ENCODE measurements at regions of chr7 and their contacts with region 1.

Region 1: DNA sequence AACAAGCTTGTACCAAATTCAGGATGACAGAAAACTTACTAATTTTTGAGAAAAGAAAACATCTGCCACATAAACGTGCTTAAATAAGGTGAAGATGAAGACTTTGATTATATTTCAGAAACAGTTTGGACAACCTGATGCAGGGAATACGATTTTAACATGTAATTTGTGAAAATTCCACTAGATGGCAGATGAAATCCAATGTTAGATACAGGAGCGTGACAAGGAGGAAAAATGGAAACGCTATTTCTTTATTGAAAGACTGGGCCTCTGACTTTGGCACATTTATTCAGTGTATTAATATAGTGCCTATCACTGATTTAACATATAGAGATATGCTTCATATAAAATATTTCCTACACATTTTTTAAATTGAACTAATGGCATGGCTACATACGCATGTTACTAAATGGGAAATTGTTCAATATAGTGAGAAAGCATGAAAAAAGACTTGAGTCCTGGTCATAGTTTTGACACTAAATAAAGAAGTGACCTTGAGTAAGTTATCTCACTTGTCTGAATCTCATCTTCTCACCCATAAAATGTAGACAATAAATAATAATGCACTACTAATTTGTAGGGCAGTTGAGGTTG is 60.7 kb downstream of the CD36 start:
- DNase-seq: no peak

Region 2: GRCh38 chr7:80087051-80087770 is 611.9 kb before region 1 on chr7:
- intact Hi-C with region 1: no loop called
- DNase-seq: no peak

Region 3: GRCh38 chr7:80581486-80582260 is 117.5 kb before region 1 on chr7:
- intact Hi-C with region 1: no loop called
- DNase-seq: no peak

Region 4: DNA sequence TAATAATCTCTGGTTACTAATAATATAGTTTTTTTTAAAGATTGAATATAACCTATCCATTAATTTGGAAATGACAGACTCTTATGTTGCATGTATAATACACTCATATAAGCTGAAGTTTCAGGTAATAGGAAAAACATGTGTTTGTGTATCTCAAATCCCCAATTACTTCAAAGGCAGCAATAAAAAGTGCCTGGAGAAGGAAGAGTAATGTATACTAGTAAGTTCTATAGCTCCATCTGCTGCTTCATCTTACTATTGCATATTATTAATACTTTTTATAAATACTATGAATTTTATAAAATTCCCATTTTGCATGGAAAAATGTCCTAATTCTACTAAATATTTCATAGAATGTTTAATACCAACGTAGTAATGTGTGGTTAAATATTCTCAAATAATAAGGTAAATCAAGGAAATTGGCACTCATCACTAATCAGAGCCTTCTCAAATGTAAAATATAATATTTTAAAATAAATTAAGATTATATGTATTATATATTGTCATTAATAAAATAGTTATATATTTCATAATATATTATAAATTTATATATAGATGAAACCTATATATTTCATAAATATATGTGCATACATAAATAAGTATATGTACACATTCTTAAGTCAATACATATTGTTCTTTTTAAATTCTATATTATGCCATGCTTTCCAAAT is 758.8 kb after region 1 on chr7:
- intact Hi-C with region 1: loop called (anchors 2 kb)
- DNase-seq: no peak

Region 5: GRCh38 chr7:81469869-81470723 is 771.0 kb after region 1 on chr7:
- intact Hi-C with region 1: loop called (anchors 1 kb)
- DNase-seq: peak; percentile 42 to 93 (median 79)

Measured in posterior cingulate gyrus (tissue), 11 donors.